Ascending aorta (tissue), 2 donors: ENCODE measurements at regions of chr16 and their contacts with region 1.

Region 1: DNA sequence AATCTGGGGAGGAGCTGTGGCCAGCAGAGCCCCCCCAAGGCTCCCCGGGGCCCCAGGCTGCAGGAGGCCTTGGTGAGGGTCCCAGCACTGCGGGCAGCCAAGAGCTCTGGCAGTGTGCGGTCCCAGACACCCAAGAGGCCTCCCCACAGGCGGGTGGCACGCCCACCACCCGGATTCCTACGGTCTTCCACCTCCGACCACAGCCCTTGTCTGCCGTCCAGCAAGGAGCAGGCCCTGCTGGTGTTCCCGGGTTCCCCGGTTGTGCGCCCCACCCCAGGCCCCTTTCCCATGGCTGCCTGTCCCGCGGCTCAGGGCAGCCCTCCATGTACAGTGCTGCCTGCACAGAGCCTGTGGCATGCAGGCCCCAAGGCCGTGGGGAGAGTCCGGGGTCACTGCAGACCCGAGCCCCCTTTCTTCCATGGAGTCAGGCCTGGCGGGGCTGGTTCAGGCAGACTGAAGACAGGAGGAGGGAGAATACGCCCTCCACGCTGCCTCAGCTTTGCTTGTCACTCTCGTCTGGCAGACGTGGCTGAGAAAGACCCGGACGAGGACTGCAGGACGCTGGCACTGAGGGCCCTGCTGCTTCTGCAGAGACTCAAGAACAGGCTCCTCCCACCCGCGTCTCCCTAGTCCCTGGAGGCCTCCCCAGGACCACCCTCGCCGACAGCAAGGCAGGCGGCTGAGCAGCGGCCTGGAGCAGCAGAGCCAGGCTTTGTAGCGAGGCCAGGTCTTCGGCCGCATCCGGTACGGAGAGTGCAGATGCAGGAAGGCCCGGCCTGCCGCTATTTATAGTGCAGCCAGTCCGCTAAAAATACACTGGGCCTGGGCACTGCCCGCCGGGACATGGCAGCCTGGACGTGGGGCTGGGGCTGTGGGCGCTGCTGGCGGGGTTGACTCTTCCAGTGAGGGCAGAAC is 16.4 kb downstream of the TELO2 start:
- DNase-seq: peak; percentile 51 to 87
- H3K4me3 ChIP-seq: peak overlapping the region in 1 of 2 donors; percentile 51
- H3K27ac ChIP-seq: peak overlapping the region; percentile 83 to 92
- H3K4me1 ChIP-seq: peaks cover 13 to 19% of the 10 kb centered on the region in 2 donors
- H3K27me3 ChIP-seq: no peaks in the 10 kb centered on the region
- CTCF ChIP-seq: no peak

Region 2: GRCh38 chr16:1481906-1482835 is 27.4 kb before region 1 on chr16:
- intact Hi-C with region 1: no loop called
- DNase-seq: no peak
- H3K4me3 ChIP-seq: no peak overlapping the region
- H3K27ac ChIP-seq: no peak overlapping the region
- H3K4me1 ChIP-seq: no peaks in the 10 kb centered on the region
- H3K27me3 ChIP-seq: no peaks in the 10 kb centered on the region
- CTCF ChIP-seq: no peak

Region 3: GRCh38 chr16:1533443-1533951 is 23.9 kb after region 1 on chr16 and contains the start of gene TMEM204:
- intact Hi-C with region 1: loop called (anchors 2 kb)
- DNase-seq: peak in 1 of 2 donors; percentile 86
- H3K4me3 ChIP-seq: peak within 1 kb of the TSS; percentile 68 to 80
- H3K27ac ChIP-seq: peak within 1 kb of the TSS; percentile 90 to 98
- H3K4me1 ChIP-seq: peaks cover 17 to 54% of the 10 kb centered on the region in 2 donors
- H3K27me3 ChIP-seq: no peaks in the 10 kb centered on the region
- CTCF ChIP-seq: no peak
- total RNA-seq, gene TMEM204: 145 TPM